Activated CD4-positive, alpha-beta memory T cell treated with anti-CD3 and anti-CD28 coated beads, Interleukin-2, amount 10 ng/mL, durations not matched to agents 7 days and 5 days (primary cell): ENCODE measurements at regions of chr12 and their contacts with region 1.

Region 1: GRCh38 chr12:56117778-56118687 is at the start of gene ZC3H10:
- DNase-seq: peak; percentile 99
- H3K4me3 Mint-ChIP-seq: peak within 1 kb of the TSS; percentile 99
- H3K27ac Mint-ChIP-seq: peak within 1 kb of the TSS; percentile 99
- H3K4me1 Mint-ChIP-seq: peaks cover 40% of the 10 kb centered on the region
- H3K27me3 Mint-ChIP-seq: no peaks in the 10 kb centered on the region
- total RNA-seq, gene ZC3H10: 8.0 to 10.3 TPM

Region 2: GRCh38 chr12:55738123-55739024 is 379.7 kb before region 1 on chr12:
- CTCF ChIA-PET with region 1: interaction called, 14 read pairs
- POLR2A ChIA-PET with region 1: interaction called, 8 read pairs
- DNase-seq: peak; percentile 87
- H3K4me3 Mint-ChIP-seq: peak overlapping the region; percentile 88
- H3K27ac Mint-ChIP-seq: peak overlapping the region; percentile 84
- H3K4me1 Mint-ChIP-seq: peaks cover 33% of the 10 kb centered on the region
- H3K27me3 Mint-ChIP-seq: peaks cover 11% of the 10 kb centered on the region

Region 3: GRCh38 chr12:56041552-56042429 is 76.2 kb before region 1 on chr12 and contains the start of gene RPS26:
- CTCF ChIA-PET with region 1: interaction called, 33 read pairs
- POLR2A ChIA-PET with region 1: interaction called, 61 read pairs
- DNase-seq: peak; percentile 94
- H3K4me3 Mint-ChIP-seq: peak within 1 kb of the TSS; percentile 100
- H3K27ac Mint-ChIP-seq: peak within 1 kb of the TSS; percentile 99
- H3K4me1 Mint-ChIP-seq: peaks cover 60% of the 10 kb centered on the region
- H3K27me3 Mint-ChIP-seq: no peaks in the 10 kb centered on the region
- total RNA-seq, gene RPS26: 30.4 to 35.0 TPM

Region 4: GRCh38 chr12:56152318-56153033 is 34.4 kb after region 1 on chr12 and contains the start of gene MYL6B:
- CTCF ChIA-PET with region 1: interaction called, 12 read pairs
- POLR2A ChIA-PET with region 1: interaction called, 28 read pairs
- DNase-seq: peak; percentile 97
- H3K4me3 Mint-ChIP-seq: peak within 1 kb of the TSS; percentile 94
- H3K27ac Mint-ChIP-seq: peak within 1 kb of the TSS; percentile 100
- H3K4me1 Mint-ChIP-seq: peaks cover 54% of the 10 kb centered on the region
- H3K27me3 Mint-ChIP-seq: no peaks in the 10 kb centered on the region
- total RNA-seq, gene MYL6B: 60.4 to 63.2 TPM

Region 5: GRCh38 chr12:56315622-56316473 is 197.8 kb after region 1 on chr12 and contains the start of gene CNPY2:
- CTCF ChIA-PET with region 1: no interaction called
- POLR2A ChIA-PET with region 1: interaction called, 10 read pairs
- DNase-seq: peak; percentile 94
- H3K4me3 Mint-ChIP-seq: peak within 1 kb of the TSS; percentile 96
- H3K27ac Mint-ChIP-seq: peak within 1 kb of the TSS; percentile 94
- H3K4me1 Mint-ChIP-seq: peaks cover 21% of the 10 kb centered on the region
- H3K27me3 Mint-ChIP-seq: no peaks in the 10 kb centered on the region
- total RNA-seq, gene CNPY2: 95.0 to 99.3 TPM

Region 6: DNA sequence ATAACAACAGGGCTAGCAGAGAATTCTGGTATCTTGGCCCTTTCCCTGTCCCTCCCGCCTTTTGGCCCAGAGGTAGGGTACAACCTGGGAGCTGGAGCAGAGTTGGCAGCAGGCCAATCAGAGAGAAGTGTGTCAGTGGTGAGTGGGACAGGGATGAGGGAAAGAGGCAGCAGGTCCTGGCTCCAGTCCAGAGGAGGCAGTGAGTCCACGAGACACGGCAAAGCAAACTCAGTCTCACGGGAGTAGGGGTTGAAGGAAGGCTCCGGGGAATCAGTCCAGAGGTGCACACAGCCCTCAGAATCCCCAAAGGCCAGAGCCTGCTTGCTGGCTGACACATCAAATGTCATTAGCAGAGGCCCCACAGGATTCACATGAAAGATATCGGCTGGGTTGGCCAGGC is 208.5 kb after region 1 on chr12:
- CTCF ChIA-PET with region 1: no interaction called
- POLR2A ChIA-PET with region 1: no interaction called
- DNase-seq: no peak
- H3K4me3 Mint-ChIP-seq: no peak overlapping the region
- H3K27ac Mint-ChIP-seq: no peak overlapping the region
- H3K4me1 Mint-ChIP-seq: peaks cover 9% of the 10 kb centered on the region
- H3K27me3 Mint-ChIP-seq: no peaks in the 10 kb centered on the region

Region 7: GRCh38 chr12:56468216-56469006 is 350.4 kb after region 1 on chr12 and contains the start of gene SPRYD4:
- CTCF ChIA-PET with region 1: interaction called, 11 read pairs
- POLR2A ChIA-PET with region 1: interaction called, 5 read pairs
- DNase-seq: peak; percentile 96
- H3K4me3 Mint-ChIP-seq: peak within 1 kb of the TSS; percentile 94
- H3K27ac Mint-ChIP-seq: peak within 1 kb of the TSS; percentile 94
- H3K4me1 Mint-ChIP-seq: peaks cover 29% of the 10 kb centered on the region
- H3K27me3 Mint-ChIP-seq: no peaks in the 10 kb centered on the region
- total RNA-seq, gene SPRYD4: 2.9 to 3.1 TPM